T-cell (primary cell): ENCODE measurements at regions of chr2 and their contacts with region 1.

Region 1: GRCh38 chr2:197378494-197379307 is 56.1 kb downstream of the SF3B1 start:
- DNase-seq: peak; percentile 22 to 79 (median 50)
- ATAC-seq: peak; percentile 44 to 77 (median 58)
- H3K4me3 ChIP-seq: no peak overlapping the region
- H3K4me3 Mint-ChIP-seq: no peak overlapping the region
- H3K27ac ChIP-seq: no peak overlapping the region
- H3K27ac Mint-ChIP-seq: peak overlapping the region in 1 of 2 donors; percentile 3
- H3K4me1 ChIP-seq: peaks cover 0 to 3% of the 10 kb centered on the region in 2 experiments
- H3K4me1 Mint-ChIP-seq: peaks cover 13 to 15% (median 14%) of the 10 kb centered on the region in 3 donors
- H3K27me3 ChIP-seq: peaks cover 0 to 4% of the 10 kb centered on the region in 2 experiments
- H3K27me3 Mint-ChIP-seq: peaks cover 0 to 3% of the 10 kb centered on the region in 2 donors

Region 2: DNA sequence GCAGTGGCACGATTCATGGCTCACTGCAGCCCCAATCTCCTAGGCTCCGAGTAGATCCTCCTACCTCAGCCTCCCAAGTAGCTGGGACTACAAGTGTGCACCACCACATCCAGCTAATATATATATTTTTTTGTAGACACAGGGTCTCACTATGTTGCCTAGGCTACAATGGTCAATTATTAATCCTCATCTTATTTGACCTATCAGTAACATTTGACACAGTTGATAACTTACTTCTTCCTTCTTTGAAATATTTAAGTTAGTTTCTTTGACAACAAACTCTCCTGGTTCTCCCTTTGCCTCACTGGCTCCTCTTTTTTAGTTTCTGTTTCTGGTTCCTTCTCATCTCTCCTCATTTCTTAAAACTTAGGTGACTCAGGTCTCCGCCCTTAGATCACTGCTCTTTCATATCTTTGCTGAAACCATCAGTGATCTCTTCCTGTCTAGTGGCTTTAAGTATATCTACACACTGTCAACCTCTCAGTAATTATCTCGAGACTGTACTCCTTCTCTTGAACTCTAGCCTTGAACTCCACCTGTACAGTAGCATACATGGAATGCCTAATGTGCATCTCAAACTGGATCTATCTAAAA is 463.7 kb before region 1 on chr2:
- CTCF ChIA-PET with region 1: no interaction called
- POLR2A ChIA-PET with region 1: interaction called in 1 of 2 experiments, 18 read pairs
- DNase-seq: peak in 4 of 35 experiments; percentile 17 to 52 (median 20)
- ATAC-seq: peak; percentile 96 to 98 (median 98)
- H3K4me3 ChIP-seq: peak overlapping the region; percentile 2 to 15
- H3K4me3 Mint-ChIP-seq: peak overlapping the region; percentile 14 to 65 (median 42)
- H3K27ac ChIP-seq: peak overlapping the region; percentile 71
- H3K27ac Mint-ChIP-seq: peak overlapping the region; percentile 92 to 93
- H3K4me1 ChIP-seq: peaks cover 11 to 16% of the 10 kb centered on the region in 2 experiments
- H3K4me1 Mint-ChIP-seq: peaks cover 34 to 38% (median 35%) of the 10 kb centered on the region in 3 donors
- H3K27me3 ChIP-seq: no peaks in the 10 kb centered on the region
- H3K27me3 Mint-ChIP-seq: no peaks in the 10 kb centered on the region

Region 3: GRCh38 chr2:197191177-197191939 is 187.3 kb before region 1 on chr2:
- CTCF ChIA-PET with region 1: interaction called in 1 of 2 experiments, 4 read pairs
- POLR2A ChIA-PET with region 1: interaction called in 1 of 2 experiments, 10 read pairs
- DNase-seq: peak in 1 of 35 experiments; percentile 84
- ATAC-seq: peak; percentile 51 to 63 (median 56)
- H3K4me3 ChIP-seq: no peak overlapping the region
- H3K4me3 Mint-ChIP-seq: peak overlapping the region in 2 of 3 donors; percentile 7 to 51
- H3K27ac ChIP-seq: peak overlapping the region; percentile 79
- H3K27ac Mint-ChIP-seq: peak overlapping the region; percentile 78 to 86
- H3K4me1 ChIP-seq: peaks cover 35 to 61% of the 10 kb centered on the region in 2 experiments
- H3K4me1 Mint-ChIP-seq: peaks cover 83 to 88% (median 87%) of the 10 kb centered on the region in 3 donors
- H3K27me3 ChIP-seq: no peaks in the 10 kb centered on the region
- H3K27me3 Mint-ChIP-seq: no peaks in the 10 kb centered on the region

Region 4: GRCh38 chr2:197345846-197346370 is 32.8 kb before region 1 on chr2:
- CTCF ChIA-PET with region 1: no interaction called
- POLR2A ChIA-PET with region 1: no interaction called
- DNase-seq: no peak
- ATAC-seq: no peak
- H3K4me3 ChIP-seq: no peak overlapping the region
- H3K4me3 Mint-ChIP-seq: no peak overlapping the region
- H3K27ac ChIP-seq: no peak overlapping the region
- H3K27ac Mint-ChIP-seq: no peak overlapping the region
- H3K4me1 ChIP-seq: no peaks in the 10 kb centered on the region
- H3K4me1 Mint-ChIP-seq: peaks cover 5 to 11% (median 9%) of the 10 kb centered on the region in 3 donors
- H3K27me3 ChIP-seq: no peaks in the 10 kb centered on the region
- H3K27me3 Mint-ChIP-seq: no peaks in the 10 kb centered on the region

Region 5: GRCh38 chr2:197515739-197516392 is 137.2 kb after region 1 on chr2 and contains the start of gene MOB4:
- CTCF ChIA-PET with region 1: no interaction called
- POLR2A ChIA-PET with region 1: no interaction called
- DNase-seq: peak; percentile 80 to 96 (median 89)
- ATAC-seq: peak; percentile 89 to 95 (median 90)
- H3K4me3 ChIP-seq: peak within 1 kb of the TSS; percentile 72 to 85
- H3K4me3 Mint-ChIP-seq: peak within 1 kb of the TSS; percentile 80 to 98 (median 97)
- H3K27ac ChIP-seq: peak within 1 kb of the TSS; percentile 93
- H3K27ac Mint-ChIP-seq: peak within 1 kb of the TSS; percentile 95 to 96
- H3K4me1 ChIP-seq: peaks cover 10 to 16% of the 10 kb centered on the region in 2 experiments
- H3K4me1 Mint-ChIP-seq: peaks cover 45 to 49% (median 46%) of the 10 kb centered on the region in 3 donors
- H3K27me3 ChIP-seq: no peaks in the 10 kb centered on the region
- H3K27me3 Mint-ChIP-seq: no peaks in the 10 kb centered on the region
- total RNA-seq, gene MOB4: 16.6 to 20.2 (median 17.7) TPM